ENCODE measurements at regions of chr12 and their contacts with region 1.

Region 1: GRCh38 chr12:58920102-58920960 is at the start of gene LRIG3:
- DNase-seq: peak; percentile 88
- H3K4me3 ChIP-seq: peak within 1 kb of the TSS; percentile 69 to 88 (median 78)
- H3K27ac ChIP-seq: peak within 1 kb of the TSS; percentile 92
- H3K4me1 ChIP-seq: peaks cover 9% of the 10 kb centered on the region
- H3K27me3 ChIP-seq: no peaks in the 10 kb centered on the region
- CTCF ChIP-seq: peak in 1 of 2 donors; percentile 28
- total RNA-seq, gene LRIG3: 45.5 to 115 TPM

Region 2: GRCh38 chr12:58346032-58346632 is 574.2 kb before region 1 on chr12:
- CTCF ChIA-PET with region 1: no interaction called
- dilution Hi-C with region 1: no loop called
- in situ Hi-C with region 1: no loop called
- intact Hi-C with region 1: loop called (anchors 5 kb)
- DNase-seq: peak; percentile 26
- H3K4me3 ChIP-seq: no peak overlapping the region
- H3K27ac ChIP-seq: no peak overlapping the region
- H3K4me1 ChIP-seq: no peaks in the 10 kb centered on the region
- H3K27me3 ChIP-seq: no peaks in the 10 kb centered on the region
- CTCF ChIP-seq: peak; percentile 73 to 77

Region 3: DNA sequence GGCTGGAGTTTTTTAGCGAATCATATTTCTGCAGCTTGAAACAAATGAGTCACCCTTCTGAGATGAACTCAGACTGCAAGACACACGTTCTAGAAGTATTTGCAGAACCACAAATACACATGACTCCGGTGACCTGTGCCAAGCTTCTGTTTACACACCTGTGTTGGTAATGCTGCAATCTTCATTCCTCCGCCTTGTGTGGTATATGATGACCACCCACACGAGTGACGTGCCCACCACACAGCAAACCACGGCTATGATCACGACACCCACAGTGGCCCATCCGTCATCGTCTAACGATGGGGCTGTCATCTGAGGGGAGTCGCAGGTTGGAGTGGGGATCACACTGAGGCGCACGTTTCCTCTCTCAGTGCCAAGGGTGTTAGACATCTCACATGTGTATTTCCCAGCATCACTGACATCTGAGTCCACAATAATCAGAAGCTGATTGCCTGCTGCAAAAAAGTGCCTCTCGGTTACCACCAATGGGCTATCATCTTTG is 43.0 kb before region 1 on chr12:
- CTCF ChIA-PET with region 1: interaction called, 3 read pairs
- dilution Hi-C with region 1: loop called (anchors 5 kb)
- in situ Hi-C with region 1: no loop called
- intact Hi-C with region 1: loop called (anchors 1 kb)
- DNase-seq: peak; percentile 97
- H3K4me3 ChIP-seq: no peak overlapping the region
- H3K27ac ChIP-seq: no peak overlapping the region
- H3K4me1 ChIP-seq: peaks cover 10% of the 10 kb centered on the region
- H3K27me3 ChIP-seq: no peaks in the 10 kb centered on the region
- CTCF ChIP-seq: no peak

Region 4: GRCh38 chr12:58888131-58888783 is 32.1 kb before region 1 on chr12:
- CTCF ChIA-PET with region 1: no interaction called
- dilution Hi-C with region 1: loop called (anchors 5 kb)
- in situ Hi-C with region 1: no loop called
- intact Hi-C with region 1: loop called (anchors 1 kb)
- DNase-seq: peak; percentile 89
- H3K4me3 ChIP-seq: no peak overlapping the region
- H3K27ac ChIP-seq: peak overlapping the region; percentile 73
- H3K4me1 ChIP-seq: peaks cover 24% of the 10 kb centered on the region
- H3K27me3 ChIP-seq: no peaks in the 10 kb centered on the region
- CTCF ChIP-seq: no peak

Region 5: GRCh38 chr12:59067083-59067482 is 146.8 kb after region 1 on chr12:
- CTCF ChIA-PET with region 1: no interaction called
- dilution Hi-C with region 1: no loop called
- in situ Hi-C with region 1: loop called in 1 of 2 experiments (anchors 10 kb)
- intact Hi-C with region 1: no loop called
- DNase-seq: peak; percentile 98
- H3K4me3 ChIP-seq: no peak overlapping the region
- H3K27ac ChIP-seq: peak overlapping the region; percentile 99
- H3K4me1 ChIP-seq: peaks cover 43% of the 10 kb centered on the region
- H3K27me3 ChIP-seq: no peaks in the 10 kb centered on the region
- CTCF ChIP-seq: no peak

Region 6: DNA sequence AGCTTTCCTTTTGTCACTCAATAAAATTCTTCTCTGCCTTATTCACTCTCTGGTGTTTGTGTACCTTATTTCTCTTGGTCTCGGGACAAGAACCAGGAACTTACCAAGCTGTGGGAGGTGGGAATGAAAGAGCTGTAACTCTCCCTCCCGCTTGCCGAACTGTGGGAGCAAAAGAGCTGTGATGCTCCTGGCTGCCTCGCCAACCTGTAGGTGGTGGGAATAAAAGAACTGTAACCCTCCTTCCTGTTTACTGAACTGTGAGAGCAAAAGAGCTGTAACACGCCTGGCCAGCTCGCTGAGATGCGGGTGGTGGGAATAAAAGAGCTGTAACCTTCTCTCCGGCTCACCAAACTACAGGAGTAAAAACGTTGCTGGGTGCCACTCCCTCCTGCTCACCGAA is 314.1 kb after region 1 on chr12:
- CTCF ChIA-PET with region 1: no interaction called
- dilution Hi-C with region 1: no loop called
- in situ Hi-C with region 1: no loop called
- intact Hi-C with region 1: no loop called
- DNase-seq: no peak
- H3K4me3 ChIP-seq: no peak overlapping the region
- H3K27ac ChIP-seq: no peak overlapping the region
- H3K4me1 ChIP-seq: no peaks in the 10 kb centered on the region
- H3K27me3 ChIP-seq: peaks cover 2% of the 10 kb centered on the region
- CTCF ChIP-seq: no peak